Activated naive CD8-positive, alpha-beta T cell treated with anti-CD3 and anti-CD28 coated beads, Interleukin-2, amount 10 ng/mL, durations not matched to agents 7 days and 5 days (primary cell): ENCODE measurements at regions of chr19 and their contacts with region 1.

Region 1: DNA sequence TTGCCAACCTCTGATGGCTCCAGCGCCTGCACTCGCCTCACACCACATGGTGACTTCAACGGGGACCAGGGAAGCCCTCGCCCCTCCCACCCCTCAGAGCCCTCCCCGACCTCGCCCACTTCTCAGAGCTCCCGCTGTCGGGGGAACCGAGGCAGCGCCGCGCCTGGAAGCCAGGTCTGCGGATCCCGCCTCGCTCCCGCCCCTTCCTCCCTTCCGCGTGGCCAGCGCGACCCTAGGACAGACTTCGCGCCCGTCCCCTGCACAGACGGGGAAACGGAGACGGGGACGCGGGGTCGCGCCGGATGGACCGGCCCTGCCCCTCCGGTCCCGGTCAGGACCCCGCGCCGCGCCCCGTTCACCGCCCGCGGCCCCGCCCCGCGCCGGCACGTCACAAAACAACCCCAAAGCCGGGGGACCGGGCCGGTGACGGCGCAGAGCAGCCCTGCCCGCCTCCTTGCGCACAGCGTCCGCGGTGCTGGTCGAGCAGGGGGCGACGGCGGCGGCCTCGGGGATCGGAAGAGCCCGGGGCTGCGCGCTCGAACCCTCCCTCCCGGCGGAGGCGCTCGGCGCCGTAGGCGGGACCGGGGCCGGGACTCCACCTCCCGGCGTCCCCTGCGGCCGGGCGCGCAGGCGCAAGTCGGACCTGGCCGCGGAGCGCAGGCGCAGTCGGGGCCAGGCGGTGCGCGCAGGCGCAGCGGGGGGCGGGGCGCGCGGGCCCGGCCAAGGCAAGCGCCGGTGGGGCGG is 379 bp upstream of the CDC34 start:
- DNase-seq: peak; percentile 100
- ATAC-seq: peak; percentile 81
- H3K4me3 Mint-ChIP-seq: peak overlapping the region; percentile 79
- H3K27ac Mint-ChIP-seq: peak overlapping the region; percentile 83
- H3K4me1 Mint-ChIP-seq: peaks cover 4% of the 10 kb centered on the region
- H3K27me3 Mint-ChIP-seq: no peaks in the 10 kb centered on the region

Region 2: DNA sequence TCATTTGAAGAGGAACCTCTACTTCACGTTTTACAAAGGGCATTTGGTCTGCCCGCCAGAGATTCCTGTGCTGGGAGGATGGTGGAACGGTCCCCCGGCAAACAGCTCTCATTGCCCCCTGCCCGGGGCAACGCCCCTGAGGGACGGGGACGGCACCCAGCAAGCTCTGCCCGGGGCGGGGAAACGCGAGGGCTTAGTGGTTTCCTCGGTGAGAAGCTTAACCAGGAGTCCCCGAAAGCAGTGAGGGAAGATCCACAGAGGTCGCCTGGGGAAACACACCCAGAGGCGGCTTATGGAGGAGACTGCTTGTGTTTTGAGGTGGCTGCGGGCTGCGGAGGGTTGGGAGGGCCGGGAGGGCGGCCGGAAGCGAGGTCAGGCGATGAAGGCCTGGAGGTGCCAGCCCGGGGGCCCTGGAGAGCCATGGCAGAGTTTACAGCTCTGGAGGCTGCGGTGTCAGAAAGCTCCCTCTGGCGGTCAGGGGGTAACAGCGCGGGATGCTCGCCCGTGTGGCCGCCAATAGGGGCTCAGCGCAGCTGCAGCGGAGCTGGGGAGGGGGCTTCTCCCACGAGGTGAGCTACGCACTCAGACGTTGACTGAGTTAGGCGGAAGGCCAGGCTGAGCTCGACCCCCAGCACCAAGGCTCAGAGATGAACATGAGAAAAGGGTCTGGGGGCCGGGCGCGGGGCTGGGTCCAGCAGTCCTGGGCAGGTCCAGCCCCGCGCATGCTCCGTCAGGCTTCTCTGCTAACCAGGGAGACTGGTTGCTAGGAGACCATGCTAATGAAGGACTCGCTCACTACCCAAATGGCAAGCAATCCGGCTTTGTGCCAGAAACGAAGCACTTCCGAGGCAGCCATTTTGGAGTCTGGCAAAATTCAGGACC is 24.5 kb before region 1 on chr19:
- POLR2A ChIA-PET with region 1: interaction called, 78 read pairs
- DNase-seq: peak; percentile 91
- ATAC-seq: peak; percentile 66
- H3K4me3 Mint-ChIP-seq: peak overlapping the region; percentile 96
- H3K27ac Mint-ChIP-seq: peak overlapping the region; percentile 99
- H3K4me1 Mint-ChIP-seq: peaks cover 28% of the 10 kb centered on the region
- H3K27me3 Mint-ChIP-seq: no peaks in the 10 kb centered on the region

Region 3: GRCh38 chr19:519449-519865 is 11.7 kb before region 1 on chr19:
- POLR2A ChIA-PET with region 1: interaction called, 17 read pairs
- DNase-seq: no peak
- ATAC-seq: no peak
- H3K4me3 Mint-ChIP-seq: no peak overlapping the region
- H3K27ac Mint-ChIP-seq: no peak overlapping the region
- H3K4me1 Mint-ChIP-seq: peaks cover 3% of the 10 kb centered on the region
- H3K27me3 Mint-ChIP-seq: no peaks in the 10 kb centered on the region

Region 4: DNA sequence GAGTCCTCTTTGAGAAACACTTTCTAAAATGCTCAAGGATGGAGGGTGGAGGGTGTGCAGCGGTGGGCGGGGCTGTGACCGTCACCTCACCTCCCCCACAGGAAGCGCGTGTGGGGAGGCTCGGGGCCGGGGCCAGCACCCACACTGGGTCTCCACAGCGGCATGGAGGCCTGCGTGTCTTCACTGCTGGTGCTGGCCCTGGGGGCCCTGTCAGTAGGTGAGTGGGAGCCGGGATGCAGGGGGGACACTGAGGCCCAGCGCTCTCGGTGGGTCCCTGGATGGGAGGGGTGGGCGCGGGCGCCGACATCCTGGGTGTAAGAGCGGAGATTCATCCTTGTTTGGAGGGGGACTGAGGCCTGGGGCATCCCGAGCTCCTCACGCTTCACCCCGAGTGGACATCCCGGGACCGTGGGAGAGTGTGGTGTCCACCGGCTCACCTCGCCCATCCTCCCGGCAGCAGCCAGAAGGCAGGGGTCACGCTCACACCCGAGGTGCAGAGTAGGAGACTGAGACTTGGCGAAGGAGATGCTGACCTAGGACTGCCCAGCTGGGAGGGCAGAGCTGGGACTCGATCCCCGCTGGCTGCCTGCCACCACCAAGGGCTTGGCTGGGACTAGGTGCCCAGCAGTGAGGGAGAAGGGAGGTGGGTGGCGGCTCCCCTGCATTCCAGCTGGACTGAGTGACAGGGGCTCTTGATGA is 12.9 kb after region 1 on chr19 and contains the start of gene GZMM:
- POLR2A ChIA-PET with region 1: interaction called, 19 read pairs
- DNase-seq: peak; percentile 84
- ATAC-seq: peak; percentile 88
- H3K4me3 Mint-ChIP-seq: peak within 1 kb of the TSS; percentile 92
- H3K27ac Mint-ChIP-seq: peak within 1 kb of the TSS; percentile 96
- H3K4me1 Mint-ChIP-seq: peaks cover 23% of the 10 kb centered on the region
- H3K27me3 Mint-ChIP-seq: no peaks in the 10 kb centered on the region
- total RNA-seq, gene GZMM: 81.5 to 84.5 TPM

Region 5: DNA sequence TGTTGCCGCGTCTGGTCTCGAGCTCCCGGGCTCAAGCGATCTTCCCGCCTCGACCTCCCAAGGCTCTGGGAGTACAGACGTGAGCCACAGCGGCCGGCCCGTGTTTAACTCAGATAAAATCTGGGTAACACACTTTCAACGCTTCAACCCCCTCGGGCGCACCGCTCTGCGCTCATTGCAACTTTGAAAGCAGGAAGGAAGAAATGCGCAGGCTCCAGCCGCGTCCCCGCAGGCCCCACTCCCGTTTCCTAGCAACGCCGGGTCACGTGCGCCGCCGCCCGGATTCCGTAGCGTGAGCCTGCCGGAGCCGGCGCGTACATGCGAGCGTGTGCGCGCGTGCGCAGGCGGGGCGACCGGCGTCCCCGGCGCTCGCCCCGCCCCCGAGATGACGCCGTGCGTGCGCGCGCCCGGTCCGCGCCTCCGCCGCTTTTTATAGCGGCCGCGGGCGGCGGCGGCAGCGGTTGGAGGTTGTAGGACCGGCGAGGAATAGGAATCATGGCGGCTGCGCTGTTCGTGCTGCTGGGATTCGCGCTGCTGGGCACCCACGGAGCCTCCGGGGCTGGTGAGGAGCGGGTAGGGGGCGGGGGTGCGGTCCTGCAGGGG is 41.1 kb after region 1 on chr19 and contains the start of gene BSG:
- POLR2A ChIA-PET with region 1: interaction called, 24 read pairs
- DNase-seq: peak; percentile 99
- ATAC-seq: peak; percentile 83
- H3K4me3 Mint-ChIP-seq: peak within 1 kb of the TSS; percentile 97
- H3K27ac Mint-ChIP-seq: peak within 1 kb of the TSS; percentile 97
- H3K4me1 Mint-ChIP-seq: peaks cover 26% of the 10 kb centered on the region
- H3K27me3 Mint-ChIP-seq: no peaks in the 10 kb centered on the region
- total RNA-seq, gene BSG: 183 to 196 TPM